ENCODE measurements at regions of chr3 and their contacts with region 1.

Region 1: GRCh38 chr3:50542177-50543034 is 25.1 kb downstream of the C3orf18 start:
- DNase-seq: peak; percentile 38 to 76 (median 63)
- ATAC-seq: peak; percentile 84
- H3K4me3 ChIP-seq: no peak overlapping the region
- H3K4me3 Mint-ChIP-seq: no peak overlapping the region
- H3K27ac ChIP-seq: no peak overlapping the region
- H3K27ac Mint-ChIP-seq: no peak overlapping the region
- H3K4me1 ChIP-seq: peaks cover 3% of the 10 kb centered on the region
- H3K4me1 Mint-ChIP-seq: no peaks in the 10 kb centered on the region
- H3K27me3 ChIP-seq: no peaks in the 10 kb centered on the region
- H3K27me3 Mint-ChIP-seq: peaks cover 10% of the 10 kb centered on the region
- CTCF ChIP-seq: peak; percentile 78

Region 2: DNA sequence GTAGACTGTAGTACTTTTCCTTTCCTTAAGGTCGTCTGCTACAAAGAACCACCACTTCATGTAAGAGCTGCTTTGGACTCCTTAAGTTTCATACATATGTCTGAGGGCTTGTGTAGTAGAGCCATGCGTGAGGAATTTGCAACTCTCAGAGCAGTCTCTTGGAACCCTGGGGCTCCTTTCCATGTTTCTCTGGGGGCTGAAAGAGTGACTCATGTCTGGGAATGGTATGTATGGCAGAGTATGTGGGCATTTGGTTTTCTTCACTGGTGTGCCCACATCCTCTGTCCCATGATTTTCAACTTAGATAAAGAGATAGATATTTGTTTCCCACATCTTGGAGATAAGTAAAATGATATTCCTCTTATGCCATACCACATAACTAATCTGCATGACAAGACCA is 474.3 kb before region 1 on chr3:
- CTCF ChIA-PET with region 1: no interaction called
- POLR2A ChIA-PET with region 1: no interaction called
- intact Hi-C with region 1: loop called in 1 of 2 experiments (anchors 5 kb)
- DNase-seq: no peak
- ATAC-seq: no peak
- H3K4me3 ChIP-seq: no peak overlapping the region
- H3K4me3 Mint-ChIP-seq: no peak overlapping the region
- H3K27ac ChIP-seq: no peak overlapping the region
- H3K27ac Mint-ChIP-seq: no peak overlapping the region
- H3K4me1 ChIP-seq: no peaks in the 10 kb centered on the region
- H3K4me1 Mint-ChIP-seq: no peaks in the 10 kb centered on the region
- H3K27me3 ChIP-seq: no peaks in the 10 kb centered on the region
- H3K27me3 Mint-ChIP-seq: no peaks in the 10 kb centered on the region
- CTCF ChIP-seq: no peak

Region 3: DNA sequence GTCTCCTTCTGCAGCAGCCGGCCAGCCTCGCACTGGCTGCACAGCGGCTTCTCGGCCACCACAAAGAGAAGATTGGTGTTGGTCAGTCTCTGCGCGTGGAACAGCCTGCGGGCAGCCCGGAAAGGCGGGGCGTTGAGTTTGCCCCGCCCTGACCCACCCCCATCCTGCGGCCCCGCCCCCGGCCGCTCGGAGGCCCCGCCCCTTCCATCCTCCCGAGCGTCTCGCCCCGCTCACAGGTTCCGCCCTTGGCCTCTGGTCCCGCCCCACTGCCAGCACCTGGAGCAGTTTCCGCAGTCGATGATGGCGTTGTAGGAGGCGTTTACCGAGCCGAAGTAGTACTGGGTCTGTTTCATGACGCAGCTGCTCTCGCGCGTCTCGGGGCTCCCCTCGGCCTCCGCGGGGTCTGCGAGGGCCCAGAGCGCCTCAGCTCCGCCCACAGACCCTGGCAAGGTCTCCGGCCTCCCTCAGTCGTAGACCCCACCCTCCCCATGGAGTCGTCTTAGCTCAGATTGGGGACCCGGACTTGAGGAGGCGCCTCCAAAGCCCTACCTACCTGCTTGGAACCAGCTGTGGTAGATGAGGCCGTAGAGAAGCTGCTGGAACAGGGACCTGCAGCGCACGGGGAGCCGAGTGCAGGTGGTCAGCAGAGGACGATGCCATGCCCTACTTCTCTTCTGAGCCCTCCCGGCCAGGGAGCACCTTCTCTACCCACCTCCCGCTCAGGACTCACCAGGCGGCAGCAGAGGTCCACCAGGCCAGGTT is 177.1 kb before region 1 on chr3:
- CTCF ChIA-PET with region 1: interaction called, 8 read pairs
- POLR2A ChIA-PET with region 1: no interaction called
- intact Hi-C with region 1: loop called (anchors 1 to 5 kb)
- DNase-seq: peak; percentile 89 to 98 (median 94)
- ATAC-seq: peak; percentile 95
- H3K4me3 ChIP-seq: peak overlapping the region; percentile 68 to 81
- H3K4me3 Mint-ChIP-seq: peak overlapping the region; percentile 87
- H3K27ac ChIP-seq: peak overlapping the region; percentile 91 to 92
- H3K27ac Mint-ChIP-seq: peak overlapping the region; percentile 95
- H3K4me1 ChIP-seq: peaks cover 20% of the 10 kb centered on the region
- H3K4me1 Mint-ChIP-seq: peaks cover 35% of the 10 kb centered on the region
- H3K27me3 ChIP-seq: no peaks in the 10 kb centered on the region
- H3K27me3 Mint-ChIP-seq: no peaks in the 10 kb centered on the region
- CTCF ChIP-seq: no peak

Region 4: GRCh38 chr3:50436114-50436674 is 106.2 kb before region 1 on chr3:
- CTCF ChIA-PET with region 1: interaction called, 125 read pairs
- POLR2A ChIA-PET with region 1: no interaction called
- intact Hi-C with region 1: loop called in 1 of 2 experiments (anchors 1 kb)
- DNase-seq: peak; percentile 62 to 89 (median 80)
- ATAC-seq: peak; percentile 98
- H3K4me3 ChIP-seq: no peak overlapping the region
- H3K4me3 Mint-ChIP-seq: no peak overlapping the region
- H3K27ac ChIP-seq: no peak overlapping the region
- H3K27ac Mint-ChIP-seq: no peak overlapping the region
- H3K4me1 ChIP-seq: peaks cover 7% of the 10 kb centered on the region
- H3K4me1 Mint-ChIP-seq: peaks cover 4% of the 10 kb centered on the region
- H3K27me3 ChIP-seq: no peaks in the 10 kb centered on the region
- H3K27me3 Mint-ChIP-seq: no peaks in the 10 kb centered on the region
- CTCF ChIP-seq: peak; percentile 87

Region 5: GRCh38 chr3:50474717-50475116 is 67.7 kb before region 1 on chr3:
- CTCF ChIA-PET with region 1: interaction called, 16 read pairs
- POLR2A ChIA-PET with region 1: no interaction called
- intact Hi-C with region 1: no loop called
- DNase-seq: no peak
- ATAC-seq: no peak
- H3K4me3 ChIP-seq: no peak overlapping the region
- H3K4me3 Mint-ChIP-seq: no peak overlapping the region
- H3K27ac ChIP-seq: no peak overlapping the region
- H3K27ac Mint-ChIP-seq: no peak overlapping the region
- H3K4me1 ChIP-seq: peaks cover 12% of the 10 kb centered on the region
- H3K4me1 Mint-ChIP-seq: peaks cover 25% of the 10 kb centered on the region
- H3K27me3 ChIP-seq: no peaks in the 10 kb centered on the region
- H3K27me3 Mint-ChIP-seq: no peaks in the 10 kb centered on the region
- CTCF ChIP-seq: no peak

Region 6: DNA sequence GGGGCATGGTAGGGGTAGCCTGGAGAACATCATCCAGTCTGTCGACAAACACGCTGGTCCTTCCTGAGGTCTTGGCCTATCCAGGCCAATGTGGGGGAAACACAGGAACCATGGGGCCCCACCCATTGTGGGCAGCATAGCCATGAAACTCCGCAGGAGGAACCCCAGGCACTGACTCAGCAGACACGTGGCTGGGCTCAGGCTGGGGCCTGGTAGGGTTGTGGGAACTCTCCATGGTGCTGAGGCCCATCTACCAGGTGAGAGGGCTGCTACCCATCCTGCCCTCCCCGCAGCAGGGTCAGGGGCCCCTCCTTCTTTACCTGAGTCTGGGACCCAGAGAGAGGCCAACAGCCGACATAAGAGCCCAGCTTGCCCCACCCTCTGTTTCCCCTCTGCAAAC is 16.4 kb before region 1 on chr3:
- CTCF ChIA-PET with region 1: interaction called, 14 read pairs
- POLR2A ChIA-PET with region 1: no interaction called
- intact Hi-C with region 1: no loop called
- DNase-seq: peak in 6 of 9 experiments; percentile 14 to 54 (median 40)
- ATAC-seq: peak; percentile 66
- H3K4me3 ChIP-seq: no peak overlapping the region
- H3K4me3 Mint-ChIP-seq: no peak overlapping the region
- H3K27ac ChIP-seq: no peak overlapping the region
- H3K27ac Mint-ChIP-seq: no peak overlapping the region
- H3K4me1 ChIP-seq: no peaks in the 10 kb centered on the region
- H3K4me1 Mint-ChIP-seq: no peaks in the 10 kb centered on the region
- H3K27me3 ChIP-seq: no peaks in the 10 kb centered on the region
- H3K27me3 Mint-ChIP-seq: peaks cover 14% of the 10 kb centered on the region
- CTCF ChIP-seq: no peak

Region 7: GRCh38 chr3:50674349-50675178 is 132.2 kb after region 1 on chr3 and contains the start of gene DOCK3:
- CTCF ChIA-PET with region 1: no interaction called
- POLR2A ChIA-PET with region 1: no interaction called
- intact Hi-C with region 1: no loop called
- DNase-seq: peak; percentile 29 to 87 (median 60)
- ATAC-seq: peak; percentile 86
- H3K4me3 ChIP-seq: peak within 1 kb of the TSS; percentile 54 to 61
- H3K4me3 Mint-ChIP-seq: peak within 1 kb of the TSS; percentile 81
- H3K27ac ChIP-seq: no peak within 1 kb of the TSS
- H3K27ac Mint-ChIP-seq: no peak within 1 kb of the TSS
- H3K4me1 ChIP-seq: peaks cover 14% of the 10 kb centered on the region
- H3K4me1 Mint-ChIP-seq: peaks cover 11% of the 10 kb centered on the region
- H3K27me3 ChIP-seq: peaks cover 0 to 5% of the 10 kb centered on the region in 2 experiments
- H3K27me3 Mint-ChIP-seq: peaks cover 19% of the 10 kb centered on the region
- CTCF ChIP-seq: no peak
- total RNA-seq, gene DOCK3: 2.8 to 3.0 TPM

Measured in CD8-positive, alpha-beta T cell (primary cell).